Activated CD4-positive, alpha-beta T cell treated with anti-CD3 and anti-CD28 coated beads, Interleukin-2, amount 10 ng/mL, durations not matched to agents 7 days and 5 days (primary cell): ENCODE measurements at regions of chr1 and their contacts with region 1.

Region 1: GRCh38 chr1:92485381-92486257 is 1.1 kb downstream of the GFI1 start:
- DNase-seq: peak; percentile 90
- H3K4me3 Mint-ChIP-seq: peak overlapping the region; percentile 82
- H3K27ac Mint-ChIP-seq: peak overlapping the region; percentile 90
- H3K4me1 Mint-ChIP-seq: peaks cover 50% of the 10 kb centered on the region
- H3K27me3 Mint-ChIP-seq: no peaks in the 10 kb centered on the region

Region 2: DNA sequence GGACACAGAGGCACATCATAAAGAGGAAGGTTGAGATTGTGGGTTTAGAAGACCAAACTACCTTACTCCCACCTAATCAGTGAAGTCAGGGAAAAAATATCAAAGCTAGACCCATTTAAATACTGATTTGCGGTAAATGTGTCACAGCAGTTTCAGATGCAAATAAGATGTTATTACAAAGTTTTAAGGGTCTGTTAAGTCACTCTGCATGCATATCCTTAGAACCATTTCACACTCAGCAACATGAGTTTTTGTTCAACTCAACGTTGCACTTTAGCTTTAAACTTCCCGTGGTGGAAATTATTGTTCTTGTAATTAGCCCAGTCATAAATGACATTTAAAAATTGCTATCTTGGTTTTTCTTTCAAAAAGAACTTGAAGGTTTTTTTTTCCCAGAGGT is 152.0 kb before region 1 on chr1:
- CTCF ChIA-PET with region 1: no interaction called
- POLR2A ChIA-PET with region 1: no interaction called
- DNase-seq: no peak
- H3K4me3 Mint-ChIP-seq: no peak overlapping the region
- H3K27ac Mint-ChIP-seq: no peak overlapping the region
- H3K4me1 Mint-ChIP-seq: peaks cover 16% of the 10 kb centered on the region
- H3K27me3 Mint-ChIP-seq: no peaks in the 10 kb centered on the region

Region 3: GRCh38 chr1:92473781-92474495 is 11.7 kb before region 1 on chr1:
- CTCF ChIA-PET with region 1: interaction called, 31 read pairs
- POLR2A ChIA-PET with region 1: interaction called, 7 read pairs
- DNase-seq: peak; percentile 25
- H3K4me3 Mint-ChIP-seq: no peak overlapping the region
- H3K27ac Mint-ChIP-seq: peak overlapping the region; percentile 74
- H3K4me1 Mint-ChIP-seq: peaks cover 74% of the 10 kb centered on the region
- H3K27me3 Mint-ChIP-seq: no peaks in the 10 kb centered on the region

Region 4: GRCh38 chr1:92527670-92528069 is 42.1 kb after region 1 on chr1:
- CTCF ChIA-PET with region 1: interaction called, 11 read pairs
- POLR2A ChIA-PET with region 1: interaction called, 4 read pairs
- DNase-seq: no peak
- H3K4me3 Mint-ChIP-seq: no peak overlapping the region
- H3K27ac Mint-ChIP-seq: no peak overlapping the region
- H3K4me1 Mint-ChIP-seq: peaks cover 33% of the 10 kb centered on the region
- H3K27me3 Mint-ChIP-seq: no peaks in the 10 kb centered on the region

Region 5: GRCh38 chr1:92577261-92577895 is 91.8 kb after region 1 on chr1:
- CTCF ChIA-PET with region 1: interaction called, 20 read pairs
- POLR2A ChIA-PET with region 1: interaction called, 3 read pairs
- DNase-seq: no peak
- H3K4me3 Mint-ChIP-seq: peak overlapping the region; percentile 35
- H3K27ac Mint-ChIP-seq: peak overlapping the region; percentile 76
- H3K4me1 Mint-ChIP-seq: peaks cover 77% of the 10 kb centered on the region
- H3K27me3 Mint-ChIP-seq: no peaks in the 10 kb centered on the region